Activated CD8-positive, alpha-beta T cell treated with anti-CD3 and anti-CD28 coated beads, Interleukin-2, amount 10 ng/mL, durations not matched to agents 7 days and 5 days (primary cell): ENCODE measurements at regions of chrX and their contacts with region 1.

Region 1: GRCh38 chrX:149539283-149540130 is 1.3 kb upstream of the EOLA1 start:
- DNase-seq: peak; percentile 94
- ATAC-seq: peak; percentile 67
- H3K4me3 Mint-ChIP-seq: peak overlapping the region; percentile 74
- H3K27ac Mint-ChIP-seq: peak overlapping the region; percentile 93
- H3K4me1 Mint-ChIP-seq: peaks cover 8% of the 10 kb centered on the region
- H3K27me3 Mint-ChIP-seq: no peaks in the 10 kb centered on the region

Region 2: DNA sequence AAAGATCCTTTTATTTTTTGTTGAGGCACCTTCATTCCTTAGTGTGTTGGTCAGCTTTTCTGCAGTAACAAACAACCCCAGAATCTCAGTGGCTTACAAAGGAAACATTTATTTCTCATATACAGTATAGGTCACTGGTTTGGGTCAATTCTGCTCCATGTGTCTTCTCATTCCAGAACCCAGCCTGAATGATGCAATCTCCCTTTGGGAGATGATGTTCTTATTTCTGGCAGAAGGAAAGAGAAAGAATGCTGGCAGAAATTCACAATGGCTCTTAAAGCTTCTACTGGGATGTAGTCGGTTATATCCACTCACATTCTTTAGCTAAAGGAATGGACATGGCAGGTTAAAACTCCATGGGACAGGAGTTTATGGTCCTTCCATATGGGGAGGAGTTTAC is 76.7 kb before region 1 on chrX:
- CTCF ChIA-PET with region 1: no interaction called
- POLR2A ChIA-PET with region 1: no interaction called
- DNase-seq: no peak
- ATAC-seq: no peak
- H3K4me3 Mint-ChIP-seq: no peak overlapping the region
- H3K27ac Mint-ChIP-seq: no peak overlapping the region
- H3K4me1 Mint-ChIP-seq: no peaks in the 10 kb centered on the region
- H3K27me3 Mint-ChIP-seq: peaks cover 21% of the 10 kb centered on the region

Region 3: GRCh38 chrX:149504915-149505651 is 34.4 kb before region 1 on chrX and contains the start of gene IDS:
- CTCF ChIA-PET with region 1: interaction called, 5 read pairs
- POLR2A ChIA-PET with region 1: interaction called, 15 read pairs
- DNase-seq: peak; percentile 91
- ATAC-seq: peak; percentile 72
- H3K4me3 Mint-ChIP-seq: peak within 1 kb of the TSS; percentile 81
- H3K27ac Mint-ChIP-seq: peak within 1 kb of the TSS; percentile 87
- H3K4me1 Mint-ChIP-seq: peaks cover 47% of the 10 kb centered on the region
- H3K27me3 Mint-ChIP-seq: no peaks in the 10 kb centered on the region
- total RNA-seq, gene IDS: 47.2 to 50.8 TPM

Region 4: DNA sequence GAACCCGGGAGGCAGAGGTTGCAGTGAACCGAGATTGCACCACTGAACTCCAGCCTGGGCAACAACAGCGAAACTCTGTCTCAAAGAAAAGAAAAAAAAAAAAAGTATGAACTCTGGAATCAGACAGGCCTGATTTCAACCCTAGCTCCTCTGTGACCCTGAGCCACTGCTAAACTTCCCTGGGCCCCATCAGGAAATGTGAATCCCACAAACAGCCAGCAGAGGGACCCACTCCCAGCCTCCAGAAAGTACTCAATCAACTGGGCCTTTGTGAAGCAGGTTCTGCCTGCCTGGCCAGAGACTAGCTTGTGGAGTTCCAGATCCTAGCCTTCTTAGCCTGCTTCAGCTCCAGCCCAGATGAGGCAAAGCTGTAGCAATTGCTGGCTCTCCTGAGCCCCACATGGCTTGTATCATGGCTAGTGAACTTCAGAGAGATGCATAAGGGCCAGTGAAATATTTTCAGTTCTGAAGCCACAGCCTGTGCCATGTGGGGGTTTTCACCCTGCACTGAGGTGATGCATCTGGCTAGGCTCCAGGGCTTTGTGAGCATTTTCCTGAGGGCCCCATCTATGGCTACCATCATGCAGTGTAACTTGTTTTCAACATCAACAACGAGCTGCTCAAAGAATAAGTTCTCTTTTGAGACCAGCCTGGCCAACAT is 27.2 kb before region 1 on chrX:
- CTCF ChIA-PET with region 1: interaction called, 23 read pairs
- POLR2A ChIA-PET with region 1: no interaction called
- DNase-seq: peak; percentile 67
- ATAC-seq: peak; percentile 72
- H3K4me3 Mint-ChIP-seq: no peak overlapping the region
- H3K27ac Mint-ChIP-seq: peak overlapping the region; percentile 76
- H3K4me1 Mint-ChIP-seq: peaks cover 54% of the 10 kb centered on the region
- H3K27me3 Mint-ChIP-seq: no peaks in the 10 kb centered on the region

Region 5: GRCh38 chrX:149527705-149528104 is 11.8 kb before region 1 on chrX:
- CTCF ChIA-PET with region 1: interaction called, 16 read pairs
- POLR2A ChIA-PET with region 1: interaction called, 3 read pairs
- DNase-seq: peak; percentile 47
- ATAC-seq: no peak
- H3K4me3 Mint-ChIP-seq: no peak overlapping the region
- H3K27ac Mint-ChIP-seq: peak overlapping the region; percentile 54
- H3K4me1 Mint-ChIP-seq: peaks cover 27% of the 10 kb centered on the region
- H3K27me3 Mint-ChIP-seq: no peaks in the 10 kb centered on the region

Region 6: DNA sequence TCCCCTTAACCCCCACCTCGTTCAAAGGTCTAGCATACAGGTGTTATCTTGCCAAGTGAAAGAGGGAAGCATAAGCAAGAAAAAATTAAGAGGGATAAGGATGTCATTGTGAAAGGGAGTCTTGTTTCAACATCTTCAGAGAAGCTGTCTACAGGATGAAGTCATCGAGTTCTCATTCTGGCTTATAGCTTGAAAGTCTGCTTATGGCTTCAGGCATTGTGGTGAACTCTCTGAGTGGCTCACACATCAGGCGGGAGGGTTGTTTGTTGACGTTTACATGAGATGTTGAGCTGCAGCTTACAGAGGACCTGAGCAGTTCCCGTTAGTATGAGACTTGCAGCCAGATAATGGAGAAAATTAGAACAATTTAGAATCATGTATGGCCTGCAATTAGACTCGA is 31.2 kb after region 1 on chrX:
- CTCF ChIA-PET with region 1: no interaction called
- POLR2A ChIA-PET with region 1: no interaction called
- DNase-seq: no peak
- ATAC-seq: no peak
- H3K4me3 Mint-ChIP-seq: no peak overlapping the region
- H3K27ac Mint-ChIP-seq: no peak overlapping the region
- H3K4me1 Mint-ChIP-seq: peaks cover 20% of the 10 kb centered on the region
- H3K27me3 Mint-ChIP-seq: no peaks in the 10 kb centered on the region

Region 7: GRCh38 chrX:149938427-149939270 is 399.1 kb after region 1 on chrX and contains the start of gene EOLA2:
- CTCF ChIA-PET with region 1: interaction called, 4 read pairs
- POLR2A ChIA-PET with region 1: interaction called, 11 read pairs
- DNase-seq: peak; percentile 95
- ATAC-seq: peak; percentile 54
- H3K4me3 Mint-ChIP-seq: peak within 1 kb of the TSS; percentile 82
- H3K27ac Mint-ChIP-seq: peak within 1 kb of the TSS; percentile 99
- H3K4me1 Mint-ChIP-seq: peaks cover 11% of the 10 kb centered on the region
- H3K27me3 Mint-ChIP-seq: no peaks in the 10 kb centered on the region
- total RNA-seq, gene EOLA2: 22.0 to 23.1 TPM